Activated CD8-positive, alpha-beta T cell treated with anti-CD3 and anti-CD28 coated beads, Interleukin-2, amount 10 ng/mL, durations not matched to agents 7 days and 5 days (primary cell): ENCODE measurements at regions of chr6 and their contacts with region 1.

Region 1: GRCh38 chr6:38057994-38058393 is 238.5 kb downstream of the ZFAND3 start:
- DNase-seq: no peak
- ATAC-seq: no peak
- H3K4me3 Mint-ChIP-seq: no peak overlapping the region
- H3K27ac Mint-ChIP-seq: no peak overlapping the region
- H3K4me1 Mint-ChIP-seq: peaks cover 3% of the 10 kb centered on the region
- H3K27me3 Mint-ChIP-seq: no peaks in the 10 kb centered on the region

Region 2: DNA sequence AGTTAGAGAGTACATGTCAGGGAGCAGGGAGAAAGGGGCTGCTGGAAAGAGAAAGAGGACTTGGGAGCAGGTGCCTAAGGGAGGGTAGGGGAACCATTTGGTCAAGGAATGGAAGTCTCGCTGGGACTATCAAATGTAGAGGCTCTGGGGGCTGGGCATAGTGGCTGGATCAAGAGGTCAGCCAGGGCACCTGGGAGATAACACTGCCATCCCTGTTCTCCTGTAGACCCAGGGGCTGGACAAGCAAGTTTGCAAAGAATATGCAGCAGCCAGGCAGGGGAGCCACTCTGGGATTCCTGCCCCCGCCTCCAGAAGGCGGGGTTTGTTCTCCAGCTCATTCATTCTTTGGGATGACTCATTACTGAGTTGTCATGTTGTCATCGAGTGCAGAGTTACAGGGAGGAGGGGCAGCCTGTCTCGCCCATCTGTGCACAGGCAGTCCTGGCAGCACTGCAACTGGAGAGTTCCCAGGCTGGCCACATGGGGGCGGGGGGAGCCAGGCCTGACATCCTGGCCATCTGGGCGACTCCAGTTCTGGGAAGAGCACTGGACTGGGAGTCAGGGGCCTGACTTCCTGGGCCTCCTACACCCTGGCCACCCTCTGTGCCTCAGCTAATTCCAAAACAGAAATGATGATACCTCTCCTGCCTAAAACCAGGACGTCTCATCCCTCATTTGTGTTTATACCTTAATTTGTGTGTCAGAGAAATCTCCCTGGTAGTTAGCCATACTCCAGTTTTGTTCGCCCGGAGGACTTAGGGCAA is 266.7 kb before region 1 on chr6:
- CTCF ChIA-PET with region 1: no interaction called
- POLR2A ChIA-PET with region 1: no interaction called
- DNase-seq: peak; percentile 78
- ATAC-seq: peak; percentile 97
- H3K4me3 Mint-ChIP-seq: no peak overlapping the region
- H3K27ac Mint-ChIP-seq: no peak overlapping the region
- H3K4me1 Mint-ChIP-seq: peaks cover 9% of the 10 kb centered on the region
- H3K27me3 Mint-ChIP-seq: peaks cover 2% of the 10 kb centered on the region

Region 3: DNA sequence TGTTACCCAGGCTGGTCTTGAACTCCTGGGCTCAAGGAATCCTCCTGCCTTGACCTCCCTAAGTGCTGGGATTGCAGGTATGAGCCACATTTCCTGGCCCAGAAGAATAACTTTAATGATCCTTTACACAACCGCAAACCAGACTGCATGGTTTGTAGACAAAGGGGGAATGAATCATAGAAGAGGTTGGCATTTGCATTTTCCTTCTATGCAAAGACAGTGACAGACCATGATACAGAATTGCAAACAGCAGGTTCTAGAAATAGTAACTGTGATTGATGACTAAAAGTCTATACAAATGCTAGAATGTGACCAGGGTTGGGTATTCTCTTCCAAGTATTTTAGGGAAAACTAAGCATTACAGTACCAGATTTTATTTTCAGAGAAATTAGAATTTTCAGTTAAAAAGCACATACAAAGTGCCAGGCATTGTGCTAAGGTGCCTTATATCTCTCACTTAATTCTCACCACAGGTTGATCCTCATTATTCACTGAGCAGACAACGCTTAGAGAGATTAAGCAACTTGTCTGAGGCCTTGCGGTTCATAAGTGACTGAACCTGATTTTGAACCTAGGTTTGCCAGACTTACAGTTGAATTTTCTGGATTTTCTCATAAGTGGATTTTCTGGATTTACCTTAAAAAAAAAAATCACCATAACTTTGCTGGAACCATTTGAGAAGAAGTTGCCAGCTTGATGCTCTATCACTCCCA is 91.9 kb before region 1 on chr6:
- CTCF ChIA-PET with region 1: no interaction called
- POLR2A ChIA-PET with region 1: no interaction called
- DNase-seq: no peak
- ATAC-seq: no peak
- H3K4me3 Mint-ChIP-seq: no peak overlapping the region
- H3K27ac Mint-ChIP-seq: no peak overlapping the region
- H3K4me1 Mint-ChIP-seq: peaks cover 40% of the 10 kb centered on the region
- H3K27me3 Mint-ChIP-seq: peaks cover 3% of the 10 kb centered on the region

Region 4: DNA sequence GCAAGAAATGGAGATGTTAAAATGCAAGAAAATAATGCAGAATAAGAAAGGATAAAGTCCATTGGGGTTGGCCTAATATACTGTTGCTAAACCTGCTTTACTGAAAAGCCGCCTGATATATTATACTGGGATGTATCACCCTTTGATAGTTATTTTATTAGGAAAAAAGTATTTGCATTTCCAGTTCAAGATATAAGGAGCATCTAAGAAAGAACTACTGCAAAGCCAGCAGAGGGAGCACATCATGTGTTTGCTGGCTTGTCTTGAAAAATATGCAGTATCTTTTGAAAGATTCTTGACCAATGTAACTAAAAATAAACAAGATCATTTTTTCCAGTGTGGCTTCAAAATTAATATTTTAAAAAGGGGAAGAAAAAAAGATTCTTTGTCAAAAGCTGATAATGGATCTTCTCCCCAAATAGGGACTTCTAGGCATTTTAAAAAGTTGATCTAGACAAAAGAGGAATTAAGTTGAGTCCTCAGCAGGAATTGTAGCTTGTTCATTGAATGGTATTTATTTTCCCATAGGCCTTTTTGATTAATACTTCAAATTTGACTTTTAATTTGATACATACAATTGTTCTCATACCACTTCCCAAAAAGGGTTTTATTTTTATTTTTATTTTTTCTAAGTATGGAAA is 23.6 kb before region 1 on chr6:
- CTCF ChIA-PET with region 1: interaction called, 10 read pairs
- POLR2A ChIA-PET with region 1: no interaction called
- DNase-seq: no peak
- ATAC-seq: no peak
- H3K4me3 Mint-ChIP-seq: no peak overlapping the region
- H3K27ac Mint-ChIP-seq: no peak overlapping the region
- H3K4me1 Mint-ChIP-seq: peaks cover 12% of the 10 kb centered on the region
- H3K27me3 Mint-ChIP-seq: no peaks in the 10 kb centered on the region